ENCODE measurements at regions of chr12 and their contacts with region 1.

Region 1: DNA sequence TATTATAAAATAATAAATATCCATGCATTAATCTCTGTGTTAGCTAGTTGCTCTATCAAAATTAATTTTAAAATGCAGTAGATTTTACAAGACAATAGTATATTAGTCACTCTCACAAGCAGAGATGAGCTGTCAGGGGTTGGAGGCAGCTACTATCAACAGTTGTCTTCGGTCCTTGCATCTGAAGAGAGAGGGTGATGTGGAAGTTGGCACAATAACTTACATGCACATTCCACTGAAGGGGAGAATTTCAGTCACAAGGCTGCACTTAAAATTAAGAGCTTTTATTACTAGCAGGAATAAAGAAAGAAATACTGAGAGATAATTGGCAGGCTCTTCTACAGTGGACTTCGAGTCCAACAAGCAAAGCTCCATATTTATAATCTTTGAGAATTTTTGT is 166.9 kb upstream of the DCN start:
- DNase-seq: no peak
- ATAC-seq: no peak
- H3K4me3 ChIP-seq: no peak overlapping the region
- H3K27ac ChIP-seq: no peak overlapping the region
- H3K4me1 ChIP-seq: no peaks in the 10 kb centered on the region
- H3K27me3 ChIP-seq: peaks cover 0 to 2% (median 0%) of the 10 kb centered on the region in 3 donors
- CTCF ChIP-seq: no peak

Region 2: GRCh38 chr12:90987520-90987919 is 362.0 kb before region 1 on chr12:
- intact Hi-C with region 1: loop called in 1 of 2 experiments (anchors 5 kb)
- DNase-seq: no peak
- ATAC-seq: no peak
- H3K4me3 ChIP-seq: no peak overlapping the region
- H3K27ac ChIP-seq: no peak overlapping the region
- H3K4me1 ChIP-seq: no peaks in the 10 kb centered on the region
- H3K27me3 ChIP-seq: no peaks in the 10 kb centered on the region
- CTCF ChIP-seq: no peak

Region 3: GRCh38 chr12:91205826-91206225 is 143.7 kb before region 1 on chr12:
- intact Hi-C with region 1: no loop called
- DNase-seq: no peak
- ATAC-seq: no peak
- H3K4me3 ChIP-seq: no peak overlapping the region
- H3K27ac ChIP-seq: no peak overlapping the region
- H3K4me1 ChIP-seq: no peaks in the 10 kb centered on the region
- H3K27me3 ChIP-seq: no peaks in the 10 kb centered on the region
- CTCF ChIP-seq: no peak

Region 4: DNA sequence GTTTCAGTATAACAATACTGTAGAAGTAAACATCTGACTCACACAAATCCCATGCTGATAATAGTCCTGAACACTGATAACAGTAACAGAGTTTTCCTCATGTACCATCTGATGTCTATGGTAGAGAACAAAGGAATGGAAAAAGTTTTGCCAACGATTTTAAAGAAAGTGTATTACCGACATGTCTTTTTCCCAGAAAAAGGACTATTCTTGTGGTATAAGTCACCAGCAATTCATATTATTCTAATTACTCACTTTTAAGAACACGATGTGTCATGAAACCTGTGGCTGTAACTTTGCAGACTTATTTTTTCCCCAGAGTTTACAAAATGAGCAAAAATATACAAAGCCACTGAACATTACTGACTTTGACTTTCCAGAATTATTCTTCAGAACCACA is 126.7 kb before region 1 on chr12:
- intact Hi-C with region 1: no loop called
- DNase-seq: no peak
- ATAC-seq: no peak
- H3K4me3 ChIP-seq: no peak overlapping the region
- H3K27ac ChIP-seq: no peak overlapping the region
- H3K4me1 ChIP-seq: no peaks in the 10 kb centered on the region
- H3K27me3 ChIP-seq: no peaks in the 10 kb centered on the region
- CTCF ChIP-seq: no peak

Region 5: DNA sequence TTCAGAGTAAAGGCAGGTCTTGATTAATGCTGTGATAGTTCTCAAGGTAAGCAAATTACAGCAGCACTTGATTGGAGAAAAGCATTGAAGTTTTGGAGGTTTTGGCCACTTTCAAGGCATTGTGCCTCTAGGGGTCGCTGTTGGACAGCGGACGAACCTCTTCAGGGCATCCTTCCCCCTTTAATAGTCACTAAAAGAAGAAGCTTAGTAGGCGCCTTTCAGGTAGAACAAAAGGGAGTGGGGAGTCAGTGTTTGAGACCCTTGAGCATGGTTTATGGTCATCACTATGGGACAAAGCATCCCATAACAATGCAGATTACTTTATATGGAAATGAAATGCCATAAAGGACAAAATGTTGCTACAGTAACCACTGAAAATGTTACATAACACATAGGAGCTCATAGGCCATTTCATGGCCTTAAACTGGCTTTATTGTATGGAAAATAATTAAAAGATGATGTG is 32.6 kb after region 1 on chr12:
- intact Hi-C with region 1: no loop called
- DNase-seq: peak; percentile 77 to 84
- ATAC-seq: peak; percentile 68 to 88 (median 78)
- H3K4me3 ChIP-seq: peak overlapping the region; percentile 66
- H3K27ac ChIP-seq: peak overlapping the region; percentile 65
- H3K4me1 ChIP-seq: peaks cover 5% of the 10 kb centered on the region
- H3K27me3 ChIP-seq: no peaks in the 10 kb centered on the region
- CTCF ChIP-seq: peak; percentile 89

Region 6: DNA sequence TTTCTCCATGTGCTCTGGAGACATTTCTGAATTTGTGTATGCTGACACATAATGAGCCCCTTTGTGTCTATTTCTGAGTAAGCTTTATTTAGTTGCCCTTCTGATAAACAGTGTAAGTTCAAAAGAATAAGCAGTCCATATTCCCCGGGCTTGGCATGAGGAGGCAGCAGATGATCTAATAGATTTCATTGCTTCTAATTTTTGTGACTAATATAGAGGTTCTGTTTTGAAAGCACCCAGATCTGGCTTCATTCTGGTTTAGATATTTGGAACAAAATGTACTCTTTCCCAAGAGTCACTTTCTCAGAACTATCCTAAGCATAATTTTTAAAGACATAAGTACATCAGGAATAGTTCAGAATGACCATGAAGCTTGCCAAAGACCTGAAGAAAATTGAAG is 505.2 kb after region 1 on chr12:
- intact Hi-C with region 1: no loop called
- DNase-seq: no peak
- ATAC-seq: peak in 2 of 4 donors; percentile 21 to 30
- H3K4me3 ChIP-seq: no peak overlapping the region
- H3K27ac ChIP-seq: no peak overlapping the region
- H3K4me1 ChIP-seq: no peaks in the 10 kb centered on the region
- H3K27me3 ChIP-seq: no peaks in the 10 kb centered on the region
- CTCF ChIP-seq: no peak